ENCODE measurements at regions of chr9 and their contacts with region 1.

Region 1: GRCh38 chr9:71604197-71605063 is 163.9 kb downstream of the CEMIP2 start:
- DNase-seq: peak; percentile 87
- H3K4me3 Mint-ChIP-seq: no peak overlapping the region
- H3K27ac Mint-ChIP-seq: no peak overlapping the region
- H3K4me1 Mint-ChIP-seq: no peaks in the 10 kb centered on the region
- H3K27me3 Mint-ChIP-seq: peaks cover 6% of the 10 kb centered on the region

Region 2: DNA sequence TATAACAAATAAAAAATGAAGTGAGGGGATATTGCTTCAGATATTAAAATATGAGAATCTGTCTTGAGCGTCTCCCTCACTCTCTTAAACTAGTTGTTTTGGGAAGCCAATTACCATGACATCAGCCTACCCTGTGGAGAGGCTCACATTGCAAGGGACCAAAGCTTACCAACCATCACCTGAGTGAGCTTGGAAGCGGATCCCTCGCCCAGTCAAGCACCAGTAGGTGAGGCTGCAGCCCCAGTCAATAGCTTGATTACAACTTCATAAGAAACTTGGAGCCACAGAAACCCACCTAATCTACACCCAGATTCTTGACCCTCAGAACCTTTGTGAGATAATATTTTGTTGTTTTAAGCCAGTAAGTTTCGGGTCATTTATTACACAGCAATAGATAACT is 42.3 kb before region 1 on chr9:
- CTCF ChIA-PET with region 1: no interaction called
- DNase-seq: no peak
- H3K4me3 Mint-ChIP-seq: no peak overlapping the region
- H3K27ac Mint-ChIP-seq: no peak overlapping the region
- H3K4me1 Mint-ChIP-seq: no peaks in the 10 kb centered on the region
- H3K27me3 Mint-ChIP-seq: peaks cover 12% of the 10 kb centered on the region

Region 3: GRCh38 chr9:71614409-71615010 is 10.1 kb after region 1 on chr9:
- CTCF ChIA-PET with region 1: interaction called, 11 read pairs
- DNase-seq: no peak
- H3K4me3 Mint-ChIP-seq: no peak overlapping the region
- H3K27ac Mint-ChIP-seq: no peak overlapping the region
- H3K4me1 Mint-ChIP-seq: no peaks in the 10 kb centered on the region
- H3K27me3 Mint-ChIP-seq: no peaks in the 10 kb centered on the region

Measured in activated naive CD4-positive, alpha-beta T cell treated with anti-CD3 and anti-CD28 coated beads, Interleukin-2, amount 10 ng/mL, durations not matched to agents 7 days and 5 days (primary cell).